Activated CD4-positive, alpha-beta T cell treated with anti-CD3 and anti-CD28 coated beads, Interleukin-2, amount 10 ng/mL, durations not matched to agents 24 days and 14 days (primary cell): ENCODE measurements at regions of chr15 and their contacts with region 1.

Region 1: GRCh38 chr15:74540761-74541493 is at the start of gene ARID3B:
- DNase-seq: peak; percentile 97
- H3K4me3 Mint-ChIP-seq: peak within 1 kb of the TSS; percentile 98
- H3K27ac Mint-ChIP-seq: peak within 1 kb of the TSS; percentile 95
- H3K4me1 Mint-ChIP-seq: peaks cover 44% of the 10 kb centered on the region
- H3K27me3 Mint-ChIP-seq: no peaks in the 10 kb centered on the region
- total RNA-seq, gene ARID3B: 31.1 and 33.9 TPM in 2 replicates

Region 2: DNA sequence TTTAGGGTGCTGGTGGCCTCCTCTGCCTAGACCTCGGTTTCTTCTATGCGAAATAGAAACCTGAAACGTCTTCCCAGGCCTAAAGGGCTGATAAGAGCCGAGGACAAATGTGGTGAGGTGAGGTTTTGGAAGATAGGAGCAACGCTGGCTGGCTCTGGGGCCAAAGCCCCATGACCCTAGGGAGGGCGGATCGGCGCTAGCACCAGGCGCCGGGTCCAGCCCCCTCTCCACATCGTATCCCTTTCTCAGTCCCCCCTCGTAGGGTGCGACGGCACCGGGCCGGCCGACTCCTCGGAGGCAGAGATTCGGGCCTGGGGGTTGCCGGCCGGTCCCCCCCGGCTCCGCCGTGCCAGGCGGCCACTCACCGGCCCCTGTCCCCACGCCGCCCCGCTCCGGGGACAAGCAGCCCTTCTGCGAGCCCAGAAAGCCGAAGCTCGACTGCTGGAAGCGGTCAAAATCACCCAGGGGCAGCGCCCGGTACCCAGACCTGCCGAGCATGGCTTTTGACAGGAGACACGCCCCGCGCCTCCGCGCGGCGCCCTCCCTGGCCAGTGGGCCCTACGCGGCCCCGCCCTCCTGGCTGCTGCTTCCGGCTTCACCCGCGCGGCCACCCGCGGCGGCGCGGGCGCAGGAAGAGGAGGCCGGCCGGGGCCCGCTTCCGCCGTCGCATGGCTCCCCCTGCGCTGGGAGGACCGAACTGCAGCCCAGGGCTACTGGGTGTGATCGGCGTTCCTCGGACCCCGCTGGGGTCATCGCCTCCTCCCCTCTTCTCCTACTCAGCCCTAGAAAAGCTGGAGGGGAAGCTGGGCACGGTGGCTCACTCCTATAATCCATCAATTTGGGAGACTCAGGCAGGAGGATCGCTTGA is 549.0 kb before region 1 on chr15 and contains the start of gene STOML1:
- intact Hi-C with region 1: loop called (anchors 10 kb)
- DNase-seq: peak; percentile 100
- H3K4me3 Mint-ChIP-seq: peak within 1 kb of the TSS; percentile 85
- H3K27ac Mint-ChIP-seq: peak within 1 kb of the TSS; percentile 86
- H3K4me1 Mint-ChIP-seq: peaks cover 50% of the 10 kb centered on the region
- H3K27me3 Mint-ChIP-seq: no peaks in the 10 kb centered on the region
- total RNA-seq, gene STOML1: 10.3 and 10.6 TPM in 2 replicates

Region 3: DNA sequence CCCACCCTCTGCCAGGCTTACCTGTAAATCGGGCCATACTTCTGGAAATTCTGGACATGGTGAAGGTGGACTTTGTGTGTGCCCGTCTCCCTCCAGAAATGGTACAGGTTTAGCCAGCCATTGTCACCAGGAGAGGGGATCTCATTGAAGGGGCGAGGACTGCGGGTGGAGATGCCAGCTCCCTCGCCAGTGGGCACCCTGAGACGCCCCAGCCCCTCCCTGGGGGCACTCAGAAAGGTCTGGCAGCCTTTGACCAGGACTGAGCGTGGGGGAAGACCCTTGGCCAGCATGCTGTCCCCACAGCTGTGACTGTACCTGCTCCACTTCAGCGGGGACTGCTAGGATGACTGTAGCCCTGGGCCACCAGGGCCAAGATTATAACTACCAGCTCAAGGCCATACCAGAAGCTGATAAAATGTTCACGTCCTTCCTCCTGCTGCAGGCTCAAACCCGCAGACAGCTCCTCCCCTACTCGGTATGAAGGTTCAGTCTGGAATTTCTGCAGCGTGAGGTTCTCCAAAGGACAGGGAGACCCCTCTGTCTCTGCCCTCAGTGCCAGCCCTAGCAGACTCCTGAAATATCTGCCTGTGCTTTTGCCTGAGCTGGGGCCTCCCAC is 173.5 kb before region 1 on chr15 and contains the start of gene CYP11A1:
- intact Hi-C with region 1: no loop called
- DNase-seq: no peak
- H3K4me3 Mint-ChIP-seq: peak within 1 kb of the TSS; percentile 34
- H3K27ac Mint-ChIP-seq: no peak within 1 kb of the TSS
- H3K4me1 Mint-ChIP-seq: peaks cover 3% of the 10 kb centered on the region
- H3K27me3 Mint-ChIP-seq: peaks cover 73% of the 10 kb centered on the region
- total RNA-seq, gene CYP11A1: not detected in 2 replicates

Region 4: GRCh38 chr15:74433592-74434262 is 107.2 kb before region 1 on chr15 and contains the start of gene SEMA7A:
- intact Hi-C with region 1: loop called (anchors 10 kb)
- DNase-seq: peak; percentile 96
- H3K4me3 Mint-ChIP-seq: peak within 1 kb of the TSS; percentile 95
- H3K27ac Mint-ChIP-seq: peak within 1 kb of the TSS; percentile 86
- H3K4me1 Mint-ChIP-seq: peaks cover 72% of the 10 kb centered on the region
- H3K27me3 Mint-ChIP-seq: no peaks in the 10 kb centered on the region
- total RNA-seq, gene SEMA7A: 88.0 and 89.6 TPM in 2 replicates

Region 5: DNA sequence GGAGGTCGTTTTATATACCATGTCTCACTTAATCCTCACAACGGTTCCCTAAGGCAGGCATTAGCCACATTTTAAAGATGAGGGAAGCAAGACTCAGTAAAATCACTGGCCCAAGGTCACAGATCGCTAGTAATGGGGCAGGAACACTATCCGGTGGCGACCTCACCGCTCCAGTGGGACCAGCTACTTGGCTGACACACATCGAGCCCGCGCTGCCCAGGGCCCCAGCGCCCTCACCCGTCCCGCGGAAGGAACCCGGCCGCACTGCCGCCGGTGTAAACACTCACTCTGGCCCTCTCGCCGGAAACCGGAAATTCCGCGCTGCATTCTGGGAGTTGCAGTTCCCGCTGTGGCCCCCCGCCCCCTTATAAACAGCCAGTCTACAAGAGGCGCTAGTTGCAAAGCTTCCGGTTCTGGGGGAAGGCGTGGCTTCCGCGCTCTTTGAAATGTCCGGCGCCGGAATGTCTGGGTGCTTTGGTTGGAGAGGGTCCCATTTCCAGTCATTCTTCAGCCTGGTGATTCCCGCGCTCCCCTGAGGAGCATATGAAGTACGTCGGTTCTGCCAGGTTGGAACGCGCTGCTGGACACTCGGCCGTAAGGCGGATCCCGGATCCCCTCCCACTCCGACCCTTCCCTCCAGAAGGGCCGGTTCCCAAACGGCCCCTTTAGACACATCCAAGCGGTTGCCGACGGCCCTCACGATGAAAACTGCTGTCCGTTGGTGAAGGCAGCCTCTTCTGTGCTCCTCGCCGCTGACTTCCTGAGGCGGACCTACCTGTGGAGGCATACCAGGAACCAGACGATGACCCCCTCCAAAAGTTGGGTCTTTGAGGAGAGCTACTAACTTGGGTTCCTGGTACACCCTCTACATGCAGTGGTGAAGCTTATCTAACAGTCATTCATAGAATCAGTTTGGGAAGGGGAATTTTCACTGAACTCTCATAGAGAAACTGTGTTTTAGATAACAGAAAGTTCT is 79.8 kb before region 1 on chr15 and contains the start of gene UBL7:
- intact Hi-C with region 1: loop called (anchors 1 kb)
- DNase-seq: peak; percentile 99
- H3K4me3 Mint-ChIP-seq: peak within 1 kb of the TSS; percentile 94
- H3K27ac Mint-ChIP-seq: peak within 1 kb of the TSS; percentile 94
- H3K4me1 Mint-ChIP-seq: peaks cover 42% of the 10 kb centered on the region
- H3K27me3 Mint-ChIP-seq: no peaks in the 10 kb centered on the region
- total RNA-seq, gene UBL7: 53.5 and 62.1 TPM in 2 replicates

Region 6: GRCh38 chr15:74598126-74598842 is 57.4 kb after region 1 on chr15:
- intact Hi-C with region 1: loop called (anchors 2 kb)
- DNase-seq: peak; percentile 97
- H3K4me3 Mint-ChIP-seq: peak overlapping the region; percentile 95
- H3K27ac Mint-ChIP-seq: peak overlapping the region; percentile 98
- H3K4me1 Mint-ChIP-seq: peaks cover 20% of the 10 kb centered on the region
- H3K27me3 Mint-ChIP-seq: no peaks in the 10 kb centered on the region

Region 7: DNA sequence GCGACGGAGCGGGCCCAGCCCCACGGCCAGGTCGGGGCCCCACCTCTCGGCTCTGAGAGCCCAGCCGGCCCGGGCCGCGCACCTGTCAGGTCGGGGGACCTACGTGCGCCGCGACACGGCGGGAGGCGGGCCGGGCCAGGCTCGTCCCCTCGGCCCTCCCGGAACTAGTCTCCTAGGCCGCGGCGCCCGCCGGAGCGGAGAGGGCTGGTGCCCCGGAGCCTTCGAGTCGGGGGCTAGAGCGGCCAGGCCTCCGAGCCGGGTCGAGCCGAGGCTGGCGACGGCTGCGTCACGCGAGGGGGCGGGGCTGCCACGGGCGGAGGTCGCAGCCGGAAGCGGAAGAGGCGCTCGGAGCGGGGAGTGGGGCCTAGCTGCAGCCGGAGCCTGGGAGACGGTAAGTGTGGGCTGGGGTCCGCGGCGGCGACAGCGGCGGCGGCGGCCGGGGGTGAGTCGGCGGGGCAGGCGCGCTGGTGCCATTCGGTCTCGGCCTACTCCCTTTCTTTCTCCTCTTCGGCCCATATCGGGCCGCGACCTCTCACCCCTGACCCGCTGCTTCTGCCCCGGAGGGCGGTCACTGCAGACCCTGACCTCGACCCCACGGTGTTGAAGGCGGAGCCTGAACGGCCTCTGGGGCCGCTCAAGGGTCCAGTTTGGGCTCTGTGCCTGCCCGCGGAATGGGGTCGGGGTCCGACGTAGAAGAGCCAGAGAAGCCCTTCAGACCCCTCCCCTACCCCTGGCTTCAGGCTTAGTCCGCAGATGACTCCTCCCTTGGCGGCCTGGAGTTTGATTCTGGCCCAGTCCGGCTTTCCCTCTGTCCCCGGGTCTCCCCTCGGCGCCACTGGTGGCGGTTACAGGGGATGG is 74.8 kb after region 1 on chr15 and contains the start of gene CLK3:
- intact Hi-C with region 1: loop called (anchors 1 kb)
- DNase-seq: peak; percentile 99
- H3K4me3 Mint-ChIP-seq: peak within 1 kb of the TSS; percentile 95
- H3K27ac Mint-ChIP-seq: peak within 1 kb of the TSS; percentile 97
- H3K4me1 Mint-ChIP-seq: peaks cover 41% of the 10 kb centered on the region
- H3K27me3 Mint-ChIP-seq: no peaks in the 10 kb centered on the region
- total RNA-seq, gene CLK3: 112 and 113 TPM in 2 replicates

Region 8: GRCh38 chr15:74842581-74843444 is 301.9 kb after region 1 on chr15 and contains the start of gene ULK3:
- intact Hi-C with region 1: loop called (anchors 10 kb)
- DNase-seq: peak; percentile 99
- H3K4me3 Mint-ChIP-seq: peak within 1 kb of the TSS; percentile 95
- H3K27ac Mint-ChIP-seq: peak within 1 kb of the TSS; percentile 95
- H3K4me1 Mint-ChIP-seq: peaks cover 48% of the 10 kb centered on the region
- H3K27me3 Mint-ChIP-seq: no peaks in the 10 kb centered on the region
- total RNA-seq, gene ULK3: 52.6 and 57.3 TPM in 2 replicates